ENCODE measurements at regions of chr18 and their contacts with region 1.

Region 1: GRCh38 chr18:62131301-62131909 is 55.5 kb downstream of the PIGN start:
- DNase-seq: peak in 1 of 2 donors; percentile 24
- ATAC-seq: peak in 3 of 4 donors; percentile 63 to 78 (median 71)
- H3K4me3 ChIP-seq: no peak overlapping the region
- H3K27ac ChIP-seq: no peak overlapping the region
- H3K4me1 ChIP-seq: no peaks in the 10 kb centered on the region
- H3K27me3 ChIP-seq: no peaks in the 10 kb centered on the region
- CTCF ChIP-seq: peak; percentile 95

Region 2: GRCh38 chr18:61551586-61551985 is 579.8 kb before region 1 on chr18:
- intact Hi-C with region 1: loop called (anchors 2 to 10 kb)
- DNase-seq: no peak
- ATAC-seq: peak in 2 of 4 donors; percentile 70 to 73
- H3K4me3 ChIP-seq: no peak overlapping the region
- H3K27ac ChIP-seq: no peak overlapping the region
- H3K4me1 ChIP-seq: no peaks in the 10 kb centered on the region
- H3K27me3 ChIP-seq: no peaks in the 10 kb centered on the region
- CTCF ChIP-seq: peak; percentile 72

Region 3: GRCh38 chr18:61581578-61582201 is 549.7 kb before region 1 on chr18:
- intact Hi-C with region 1: loop called (anchors 5 to 10 kb)
- DNase-seq: peak; percentile 60 to 81
- ATAC-seq: peak; percentile 68 to 93 (median 79)
- H3K4me3 ChIP-seq: peak overlapping the region; percentile 52
- H3K27ac ChIP-seq: no peak overlapping the region
- H3K4me1 ChIP-seq: no peaks in the 10 kb centered on the region
- H3K27me3 ChIP-seq: peaks cover 0 to 2% (median 0%) of the 10 kb centered on the region in 3 donors
- CTCF ChIP-seq: peak; percentile 96

Region 4: DNA sequence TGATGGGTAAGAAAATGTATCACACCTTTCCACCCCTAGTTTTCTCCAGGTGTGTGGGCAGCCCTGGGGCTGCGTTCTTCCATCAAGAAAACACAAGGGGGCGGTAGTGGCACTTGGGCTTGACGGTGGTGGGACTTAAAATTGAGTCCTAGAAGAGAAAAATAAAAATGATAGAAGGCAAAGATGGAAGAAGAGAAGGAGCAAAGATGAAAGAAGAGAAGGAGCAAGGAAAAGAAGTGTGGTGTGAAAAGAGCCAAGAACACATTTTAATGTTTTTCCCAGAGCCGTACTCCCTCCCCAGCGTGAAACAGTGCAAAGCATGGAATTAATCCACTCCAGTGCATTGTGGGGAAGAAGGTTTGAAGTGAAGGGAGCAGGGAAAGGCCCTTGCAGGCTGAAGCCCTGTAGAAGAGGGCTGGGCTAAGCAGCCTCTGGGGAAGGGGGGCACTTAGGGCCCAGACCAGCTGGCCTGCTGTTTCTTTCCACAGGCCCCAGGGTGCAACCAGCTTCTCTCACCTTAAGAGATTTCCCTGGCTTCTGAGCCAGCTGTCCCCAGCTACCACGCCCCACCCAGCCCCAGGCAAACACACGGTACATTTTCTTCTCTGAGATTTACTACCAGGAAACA is 495.4 kb before region 1 on chr18:
- intact Hi-C with region 1: loop called in 1 of 2 experiments (anchors 5 kb)
- DNase-seq: no peak
- ATAC-seq: peak in 1 of 4 donors; percentile 51
- H3K4me3 ChIP-seq: no peak overlapping the region
- H3K27ac ChIP-seq: no peak overlapping the region
- H3K4me1 ChIP-seq: no peaks in the 10 kb centered on the region
- H3K27me3 ChIP-seq: no peaks in the 10 kb centered on the region
- CTCF ChIP-seq: peak; percentile 57

Region 5: GRCh38 chr18:61854578-61855448 is 276.6 kb before region 1 on chr18:
- intact Hi-C with region 1: no loop called
- DNase-seq: no peak
- ATAC-seq: no peak
- H3K4me3 ChIP-seq: no peak overlapping the region
- H3K27ac ChIP-seq: no peak overlapping the region
- H3K4me1 ChIP-seq: no peaks in the 10 kb centered on the region
- H3K27me3 ChIP-seq: no peaks in the 10 kb centered on the region
- CTCF ChIP-seq: no peak

Region 6: GRCh38 chr18:61893971-61894750 is 237.2 kb before region 1 on chr18:
- intact Hi-C with region 1: loop called in 1 of 2 experiments (anchors 5 kb)
- DNase-seq: peak; percentile 69 to 85
- ATAC-seq: peak; percentile 83 to 94 (median 86)
- H3K4me3 ChIP-seq: peak overlapping the region; percentile 83
- H3K27ac ChIP-seq: peak overlapping the region; percentile 61
- H3K4me1 ChIP-seq: no peaks in the 10 kb centered on the region
- H3K27me3 ChIP-seq: peaks cover 0 to 53% (median 2%) of the 10 kb centered on the region in 3 donors
- CTCF ChIP-seq: peak; percentile 30